GM13976 (cell line): ENCODE measurements at regions of chr1 and their contacts with region 1.

Region 1: GRCh38 chr1:66253330-66253921 is 280.5 kb upstream of the SGIP1 start:
- DNase-seq: peak; percentile 46
- CTCF ChIP-seq: peak; percentile 82

Region 2: DNA sequence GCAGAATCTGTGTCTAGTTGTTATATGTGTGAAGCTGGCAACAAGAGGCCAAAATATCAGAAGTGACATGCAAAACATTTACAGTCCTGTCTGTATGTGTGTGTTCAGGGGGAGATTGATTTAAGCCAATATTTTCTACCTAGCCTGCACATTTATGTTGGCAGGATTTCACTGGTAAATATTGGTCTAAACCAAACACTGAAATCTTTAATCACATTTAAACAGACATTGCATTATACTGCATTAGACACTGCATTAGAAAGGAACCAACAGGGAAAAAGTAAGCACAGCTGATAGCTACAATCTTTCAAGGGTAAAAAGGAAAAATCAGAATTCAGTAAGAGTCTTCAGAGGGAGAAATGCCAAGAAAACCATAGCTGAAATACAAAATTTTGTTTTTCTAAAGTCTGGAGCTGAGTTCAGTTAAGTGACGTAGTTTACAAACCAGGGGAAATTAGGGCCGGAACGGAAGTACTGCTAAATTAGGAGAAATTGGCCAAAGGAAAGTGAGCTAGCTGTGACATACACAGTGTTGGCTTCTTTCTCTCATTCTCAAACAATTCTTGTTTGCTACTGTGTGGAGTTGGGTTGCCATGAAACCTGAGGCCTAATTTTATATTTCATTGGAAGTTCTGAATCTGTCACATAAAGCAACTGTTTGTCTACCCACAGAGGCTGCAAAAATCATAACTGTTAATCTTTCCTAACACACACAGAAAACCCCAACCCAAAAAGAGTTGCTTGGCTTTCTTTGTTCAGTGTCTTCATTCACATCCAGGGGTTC is 63.2 kb after region 1 on chr1:
- in situ Hi-C with region 1: no loop called
- DNase-seq: no peak
- CTCF ChIP-seq: no peak

Region 3: GRCh38 chr1:66350001-66350547 is 96.6 kb after region 1 on chr1:
- in situ Hi-C with region 1: loop called (anchors 10 kb)
- DNase-seq: no peak
- CTCF ChIP-seq: no peak

Region 4: DNA sequence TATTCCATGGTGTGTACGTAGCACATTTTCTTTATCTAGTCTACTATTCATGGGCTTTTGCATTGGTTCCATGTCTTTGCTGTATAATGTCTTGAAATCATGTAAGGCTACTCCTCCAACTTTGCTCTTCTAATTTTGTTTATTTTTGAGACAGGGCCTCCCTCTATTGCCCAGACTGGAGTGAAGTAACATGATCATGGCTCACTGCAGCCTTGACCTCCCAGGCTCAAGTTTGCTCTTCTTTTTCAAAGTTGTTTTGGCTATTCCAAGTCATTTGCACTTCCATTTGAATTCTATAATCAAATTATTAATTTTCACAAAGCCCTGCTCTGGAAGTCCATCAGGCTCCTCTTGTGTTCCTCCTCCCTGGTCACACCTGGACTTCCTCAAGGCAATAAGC is 190.4 kb after region 1 on chr1:
- in situ Hi-C with region 1: loop called (anchors 5 kb)
- DNase-seq: no peak
- CTCF ChIP-seq: no peak

Region 5: GRCh38 chr1:66725885-66726665 is 472.6 kb after region 1 on chr1:
- in situ Hi-C with region 1: loop called (anchors 25 kb)
- DNase-seq: peak; percentile 29
- CTCF ChIP-seq: peak; percentile 87